ENCODE measurements at regions of chr1 and their contacts with region 1.

Region 1: GRCh38 chr1:36397378-36398230 is at the start of gene LSM10:
- DNase-seq: peak; percentile 96
- ATAC-seq: peak; percentile 98
- H3K4me3 ChIP-seq: peak within 1 kb of the TSS; percentile 85
- H3K27ac ChIP-seq: peak within 1 kb of the TSS; percentile 81
- H3K4me1 ChIP-seq: no peaks in the 10 kb centered on the region
- H3K27me3 ChIP-seq: no peaks in the 10 kb centered on the region
- CTCF ChIP-seq: no peak
- POLR2A ChIP-seq: peak; percentile 91
- RAD21 ChIP-seq: 0 out of 2 replicates have a peak, but pooled peaks have one; percentile 7
- total RNA-seq, gene LSM10: 10.3 and 11.7 TPM in 2 replicates

Region 2: DNA sequence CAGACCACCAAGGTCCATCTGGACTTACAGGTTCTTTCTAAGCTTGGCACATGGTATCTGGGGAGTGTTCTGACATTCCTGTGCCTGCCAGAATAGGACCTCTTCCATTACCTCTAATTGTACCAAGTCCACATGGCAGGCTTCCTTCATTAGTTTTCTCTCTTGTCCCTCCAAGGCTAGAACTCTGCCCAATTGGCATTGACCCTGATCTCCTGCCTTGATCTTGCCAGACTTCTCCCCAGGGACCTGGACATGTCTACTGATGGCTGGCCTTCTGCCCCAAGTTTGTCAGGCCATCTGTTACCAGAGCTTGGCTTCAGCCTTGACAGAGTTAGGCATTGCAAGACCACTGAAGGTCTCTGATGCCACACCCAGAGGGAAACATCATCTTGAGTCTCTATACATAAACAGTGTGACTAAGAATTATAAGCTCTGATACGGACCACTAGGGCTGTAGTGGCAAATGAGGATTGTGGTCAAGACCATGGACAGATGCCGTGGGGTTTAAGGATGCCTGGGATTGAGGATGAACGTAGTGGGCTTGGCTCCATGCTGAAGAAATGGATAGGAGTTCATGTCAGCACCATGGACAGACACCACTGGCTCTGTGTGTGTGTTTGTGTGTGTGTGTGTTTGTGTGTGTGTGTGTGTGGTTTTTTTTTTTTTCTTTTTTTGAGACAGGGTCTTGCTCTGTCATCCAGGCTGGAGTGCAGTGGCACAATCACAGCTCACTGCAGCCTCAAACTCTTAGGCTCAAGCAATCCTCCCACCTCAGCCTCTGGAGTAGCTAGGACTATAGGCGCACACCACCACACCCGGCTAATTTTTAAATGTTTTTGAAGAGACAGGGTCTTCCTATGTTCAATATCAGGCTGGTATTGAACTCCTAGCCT is 736.8 kb before region 1 on chr1:
- CTCF ChIA-PET with region 1: no interaction called
- POLR2A ChIA-PET with region 1: no interaction called
- dilution Hi-C with region 1: no loop called
- in situ Hi-C with region 1: no loop called
- intact Hi-C with region 1: no loop called
- DNase-seq: peak; percentile 75
- ATAC-seq: peak; percentile 67
- H3K4me3 ChIP-seq: no peak overlapping the region
- H3K27ac ChIP-seq: no peak overlapping the region
- H3K4me1 ChIP-seq: peaks cover 3% of the 10 kb centered on the region; the same call in 1 of the 2 replicates
- H3K27me3 ChIP-seq: peaks cover 2% of the 10 kb centered on the region; the same call in 1 of the 2 replicates
- CTCF ChIP-seq: no peak
- POLR2A ChIP-seq: no peak
- RAD21 ChIP-seq: no peak

Region 3: GRCh38 chr1:36385410-36386257 is 12.0 kb before region 1 on chr1 and contains the start of gene STK40:
- CTCF ChIA-PET with region 1: interaction called, 4 read pairs
- POLR2A ChIA-PET with region 1: interaction called, 5 read pairs
- dilution Hi-C with region 1: no loop called
- in situ Hi-C with region 1: no loop called
- intact Hi-C with region 1: loop called (anchors 1 kb)
- DNase-seq: peak; percentile 100
- ATAC-seq: peak; percentile 87
- H3K4me3 ChIP-seq: peak within 1 kb of the TSS; percentile 96
- H3K27ac ChIP-seq: peak within 1 kb of the TSS; percentile 94
- H3K4me1 ChIP-seq: peaks cover 20% of the 10 kb centered on the region
- H3K27me3 ChIP-seq: no peaks in the 10 kb centered on the region
- CTCF ChIP-seq: no peak
- POLR2A ChIP-seq: no peak; the same call in none of the 2 replicates
- RAD21 ChIP-seq: no peak
- total RNA-seq, gene STK40: 13.9 and 16.0 TPM in 2 replicates

Region 4: GRCh38 chr1:36486436-36487335 is 89.1 kb after region 1 on chr1:
- CTCF ChIA-PET with region 1: no interaction called
- POLR2A ChIA-PET with region 1: no interaction called
- dilution Hi-C with region 1: no loop called
- in situ Hi-C with region 1: no loop called
- intact Hi-C with region 1: no loop called
- DNase-seq: no peak
- ATAC-seq: no peak
- H3K4me3 ChIP-seq: no peak overlapping the region
- H3K27ac ChIP-seq: no peak overlapping the region
- H3K4me1 ChIP-seq: no peaks in the 10 kb centered on the region
- H3K27me3 ChIP-seq: peaks cover 31% of the 10 kb centered on the region
- CTCF ChIP-seq: no peak
- POLR2A ChIP-seq: no peak
- RAD21 ChIP-seq: no peak

Measured in IMR-90 (cell line).